Activated B cell treated with CpG ODN at 0.5 μM for 24 hours (primary cell): ENCODE measurements at regions of chr1 and their contacts with region 1.

Region 1: DNA sequence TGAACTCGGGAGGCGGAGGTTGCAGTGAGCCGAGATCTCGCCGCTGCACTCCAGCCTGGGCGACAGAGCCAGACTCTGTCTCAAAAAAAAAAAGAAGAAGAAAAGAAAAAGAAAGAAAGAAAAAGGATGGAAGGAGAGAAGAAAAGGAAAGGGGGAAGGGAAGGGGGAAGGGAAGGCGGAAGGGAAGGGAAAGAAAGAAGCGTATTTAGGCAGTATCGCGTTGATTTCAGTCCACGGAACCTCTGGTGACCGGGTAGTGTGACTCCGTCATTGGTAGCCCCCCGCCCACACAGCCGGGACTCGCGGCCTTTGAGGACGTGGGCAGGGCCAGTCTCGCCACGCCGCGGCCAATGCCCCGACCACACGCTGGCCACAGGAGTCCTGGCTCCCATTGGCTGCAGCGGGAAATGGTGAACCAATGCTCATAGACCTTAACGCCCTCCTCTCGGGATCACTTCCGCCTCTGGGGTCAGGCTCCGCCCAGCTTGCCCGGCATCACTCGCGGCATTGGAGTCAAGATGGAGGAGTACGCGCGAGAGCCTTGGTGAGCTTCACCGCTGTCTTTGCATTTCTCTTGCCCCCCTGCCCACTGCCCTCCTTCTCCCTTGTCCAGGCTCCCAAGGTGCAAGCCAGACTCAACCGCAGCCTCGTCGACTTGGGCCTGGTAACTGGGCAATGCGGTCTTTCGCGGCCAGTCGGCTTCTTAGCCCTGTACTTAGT is at the start of gene TIMM17A:
- DNase-seq: peak; percentile 90
- ATAC-seq: peak; percentile 98
- H3K4me3 Mint-ChIP-seq: peak within 1 kb of the TSS; percentile 98
- H3K27ac Mint-ChIP-seq: peak within 1 kb of the TSS; percentile 97
- H3K4me1 Mint-ChIP-seq: peaks cover 26% of the 10 kb centered on the region
- H3K27me3 Mint-ChIP-seq: no peaks in the 10 kb centered on the region
- CTCF ChIP-seq: no peak
- total RNA-seq, gene TIMM17A: 50.4 and 51.3 TPM in 2 replicates

Region 2: GRCh38 chr1:201828820-201829774 is 126.1 kb before region 1 on chr1 and contains the start of gene IPO9:
- CTCF ChIA-PET with region 1: no interaction called
- POLR2A ChIA-PET with region 1: interaction called, 10 read pairs
- intact Hi-C with region 1: loop called (anchors 1 kb)
- DNase-seq: peak; percentile 95
- ATAC-seq: peak; percentile 94
- H3K4me3 Mint-ChIP-seq: peak within 1 kb of the TSS; percentile 93
- H3K27ac Mint-ChIP-seq: peak within 1 kb of the TSS; percentile 96
- H3K4me1 Mint-ChIP-seq: peaks cover 42% of the 10 kb centered on the region
- H3K27me3 Mint-ChIP-seq: no peaks in the 10 kb centered on the region
- CTCF ChIP-seq: peak; percentile 35
- total RNA-seq, gene IPO9: 45.7 and 48.2 TPM in 2 replicates

Region 3: GRCh38 chr1:201874672-201875071 is 80.5 kb before region 1 on chr1:
- CTCF ChIA-PET with region 1: no interaction called
- POLR2A ChIA-PET with region 1: no interaction called
- intact Hi-C with region 1: no loop called
- DNase-seq: no peak
- ATAC-seq: no peak
- H3K4me3 Mint-ChIP-seq: no peak overlapping the region
- H3K27ac Mint-ChIP-seq: no peak overlapping the region
- H3K4me1 Mint-ChIP-seq: no peaks in the 10 kb centered on the region
- H3K27me3 Mint-ChIP-seq: no peaks in the 10 kb centered on the region
- CTCF ChIP-seq: no peak

Region 4: DNA sequence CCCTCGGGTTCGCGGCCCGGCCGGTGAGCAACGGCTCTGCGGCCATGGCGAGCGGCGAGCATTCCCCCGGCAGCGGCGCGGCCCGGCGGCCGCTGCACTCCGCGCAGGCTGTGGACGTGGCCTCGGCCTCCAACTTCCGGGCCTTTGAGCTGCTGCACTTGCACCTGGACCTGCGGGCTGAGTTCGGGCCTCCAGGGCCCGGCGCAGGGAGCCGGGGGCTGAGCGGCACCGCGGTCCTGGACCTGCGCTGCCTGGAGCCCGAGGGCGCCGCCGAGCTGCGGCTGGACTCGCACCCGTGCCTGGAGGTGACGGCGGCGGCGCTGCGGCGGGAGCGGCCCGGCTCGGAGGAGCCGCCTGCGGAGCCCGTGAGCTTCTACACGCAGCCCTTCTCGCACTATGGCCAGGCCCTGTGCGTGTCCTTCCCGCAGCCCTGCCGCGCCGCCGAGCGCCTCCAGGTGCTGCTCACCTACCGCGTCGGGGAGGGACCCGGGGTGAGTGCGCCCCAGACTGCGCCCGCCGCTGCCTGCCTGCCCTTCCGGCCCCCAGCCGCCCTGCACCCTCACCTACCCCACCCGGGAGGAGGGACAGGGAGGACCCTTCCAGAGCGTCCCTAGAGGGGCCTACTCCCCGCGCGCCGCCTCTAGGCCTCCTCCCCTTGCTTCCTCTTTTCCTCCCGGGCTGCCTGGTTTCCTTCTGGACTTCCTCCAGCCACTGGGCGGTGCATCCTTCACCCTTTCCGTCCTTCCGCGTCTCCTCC is 27.6 kb after region 1 on chr1 and contains the start of gene RNPEP:
- CTCF ChIA-PET with region 1: no interaction called
- POLR2A ChIA-PET with region 1: interaction called, 16 read pairs
- intact Hi-C with region 1: loop called (anchors 1 kb)
- DNase-seq: peak; percentile 60
- ATAC-seq: peak; percentile 77
- H3K4me3 Mint-ChIP-seq: peak within 1 kb of the TSS; percentile 94
- H3K27ac Mint-ChIP-seq: peak within 1 kb of the TSS; percentile 81
- H3K4me1 Mint-ChIP-seq: peaks cover 19% of the 10 kb centered on the region
- H3K27me3 Mint-ChIP-seq: no peaks in the 10 kb centered on the region
- CTCF ChIP-seq: no peak
- total RNA-seq, gene RNPEP: 37.3 and 38.3 TPM in 2 replicates